ENCODE measurements at regions of chr1 and their contacts with region 1.

Region 1: GRCh38 chr1:178501705-178502329 is 5.1 kb upstream of the CLEC20A start:
- DNase-seq: no peak
- H3K4me3 ChIP-seq: no peak overlapping the region
- H3K27me3 ChIP-seq: 0 out of 2 replicates have a peak, but pooled peaks cover 1% of the 10 kb centered on the region
- CTCF ChIP-seq: peak; percentile 97

Region 2: GRCh38 chr1:178037503-178038253 is 464.1 kb before region 1 on chr1:
- CTCF ChIA-PET with region 1: interaction called, 10 read pairs
- POLR2A ChIA-PET with region 1: no interaction called
- DNase-seq: no peak
- H3K4me3 ChIP-seq: peak overlapping the region; percentile 52
- H3K27me3 ChIP-seq: no peaks in the 10 kb centered on the region
- CTCF ChIP-seq: peak; percentile 48

Region 3: DNA sequence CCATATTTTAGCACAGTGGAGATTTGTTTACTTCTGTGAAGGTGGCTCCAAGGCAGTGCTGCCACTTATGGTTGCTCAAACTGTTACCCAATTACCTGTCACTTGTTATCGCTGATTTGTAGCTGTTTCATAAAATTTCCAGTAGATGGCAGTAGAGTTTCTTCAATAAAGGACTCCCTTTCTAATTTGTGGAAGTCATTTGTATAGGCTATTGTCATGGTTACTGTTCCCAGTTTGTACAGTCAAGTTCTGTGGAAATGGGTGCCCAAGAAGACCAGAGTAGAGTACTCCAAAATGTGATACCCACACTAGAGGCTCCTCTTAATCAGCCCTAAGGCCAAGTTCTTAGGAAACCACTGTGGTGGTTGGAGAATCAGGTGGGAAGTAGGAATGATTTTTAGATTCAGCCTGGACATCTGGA is 191.1 kb before region 1 on chr1:
- CTCF ChIA-PET with region 1: interaction called, 111 read pairs
- POLR2A ChIA-PET with region 1: no interaction called
- DNase-seq: peak; percentile 46
- H3K4me3 ChIP-seq: no peak overlapping the region
- H3K27me3 ChIP-seq: no peaks in the 10 kb centered on the region
- CTCF ChIP-seq: peak; percentile 66

Region 4: GRCh38 chr1:178470411-178470960 is 31.3 kb before region 1 on chr1:
- CTCF ChIA-PET with region 1: interaction called, 15 read pairs
- POLR2A ChIA-PET with region 1: no interaction called
- DNase-seq: no peak
- H3K4me3 ChIP-seq: no peak overlapping the region
- H3K27me3 ChIP-seq: no peaks in the 10 kb centered on the region
- CTCF ChIP-seq: no peak

Region 5: GRCh38 chr1:178513278-178514022 is 11.6 kb after region 1 on chr1:
- CTCF ChIA-PET with region 1: interaction called, 91 read pairs
- POLR2A ChIA-PET with region 1: no interaction called
- DNase-seq: no peak
- H3K4me3 ChIP-seq: no peak overlapping the region
- H3K27me3 ChIP-seq: no peaks in the 10 kb centered on the region; the same call in 1 of the 2 replicates
- CTCF ChIP-seq: peak; percentile 8; the same call in 1 of the 2 replicates

Region 6: DNA sequence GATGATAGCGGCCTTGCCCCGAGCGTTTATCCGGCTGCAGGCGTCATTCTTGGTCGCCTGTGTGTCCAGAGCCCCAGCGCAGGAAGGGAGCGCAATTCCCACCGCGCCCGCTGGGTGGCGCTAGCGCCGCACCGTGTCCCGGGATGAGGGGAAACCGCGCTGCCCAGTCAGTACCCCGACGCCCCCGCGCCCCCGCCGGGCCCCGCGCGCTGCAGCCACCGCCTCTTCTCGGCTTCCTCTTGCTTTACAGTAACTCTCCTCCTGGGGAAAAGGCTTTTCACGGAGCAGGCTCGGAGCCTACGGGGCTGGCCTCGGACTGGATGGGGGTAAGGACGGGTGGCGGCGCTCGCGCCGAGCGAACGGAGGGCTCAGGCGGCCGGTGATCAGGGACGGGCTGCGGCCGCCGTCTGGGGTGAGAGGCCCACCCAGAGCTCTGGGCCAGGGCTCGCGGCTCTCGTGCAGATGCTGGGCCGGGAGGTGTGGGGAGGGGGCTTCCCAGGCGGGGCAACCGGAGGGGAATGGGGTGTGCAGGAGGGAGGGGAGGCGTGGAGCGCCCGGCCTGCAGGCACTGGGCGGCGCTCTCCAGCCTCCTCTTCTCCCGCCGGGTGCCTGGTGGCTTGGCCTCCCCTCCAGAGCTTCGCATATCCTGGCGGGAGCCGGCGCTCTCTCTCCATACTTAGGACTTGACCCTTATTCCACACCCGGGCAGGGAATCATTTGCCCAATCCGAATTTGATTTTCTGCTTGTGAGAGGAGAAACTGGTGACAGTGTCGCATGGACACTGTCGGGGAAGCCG is 40.9 kb after region 1 on chr1:
- CTCF ChIA-PET with region 1: interaction called, 16 read pairs
- POLR2A ChIA-PET with region 1: no interaction called
- DNase-seq: peak; percentile 28
- H3K4me3 ChIP-seq: peak overlapping the region; percentile 62
- H3K27me3 ChIP-seq: no peaks in the 10 kb centered on the region
- CTCF ChIP-seq: peak; percentile 81